ENCODE measurements at regions of chr19 and their contacts with region 1.

Region 1: GRCh38 chr19:39970675-39971379 is at the start of gene PSMC4:
- DNase-seq: peak; percentile 99
- ATAC-seq: peak; percentile 95
- H3K4me3 Mint-ChIP-seq: peak within 1 kb of the TSS; percentile 89
- H3K27ac Mint-ChIP-seq: peak within 1 kb of the TSS; percentile 96
- H3K4me1 Mint-ChIP-seq: peaks cover 47% of the 10 kb centered on the region
- H3K27me3 Mint-ChIP-seq: no peaks in the 10 kb centered on the region
- total RNA-seq, gene PSMC4: 114 to 140 TPM

Region 2: DNA sequence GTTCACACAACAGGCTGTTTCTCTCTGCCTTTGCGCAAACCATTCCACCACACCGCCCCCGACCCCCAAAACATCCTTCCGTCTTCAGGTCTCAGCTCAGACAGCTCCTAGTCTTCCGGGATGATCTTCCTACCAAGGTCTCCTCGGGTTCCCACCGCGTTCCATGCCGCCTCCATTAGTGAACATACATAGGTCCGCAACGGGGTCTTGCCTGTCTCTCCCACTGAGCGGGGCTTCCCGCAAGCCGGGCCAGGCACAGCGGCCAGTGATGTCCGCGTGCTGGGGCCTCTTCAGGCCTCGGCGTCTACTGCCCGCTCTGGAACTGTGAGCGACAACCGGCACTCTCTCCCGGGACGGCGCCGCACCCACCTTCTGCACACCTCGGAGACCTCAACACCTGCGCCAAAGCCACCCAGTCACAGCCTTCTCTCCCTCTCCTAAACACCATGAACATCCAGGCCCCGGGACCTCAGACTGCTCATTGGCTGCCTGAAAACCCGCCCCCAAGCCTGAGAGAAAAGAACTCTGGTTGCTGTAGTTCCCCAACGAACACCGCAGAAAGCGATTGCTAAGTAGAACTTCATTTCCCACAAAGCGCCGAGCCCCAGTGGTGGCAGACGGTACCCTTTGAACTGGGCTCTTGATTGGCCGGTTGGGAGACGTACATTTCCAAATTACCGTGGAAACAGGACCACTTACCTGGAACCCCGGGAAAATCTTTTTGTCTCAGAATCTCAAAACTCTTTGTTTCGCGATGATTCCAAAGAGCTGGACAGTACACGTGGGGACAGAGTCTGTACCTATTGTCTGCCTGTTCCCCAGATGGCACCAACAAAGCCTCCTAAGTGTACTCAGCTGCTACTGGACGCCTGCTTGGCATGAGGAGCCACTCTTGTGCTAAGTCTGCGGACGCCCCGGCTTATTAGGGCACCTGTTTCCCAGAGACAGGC is 146.4 kb before region 1 on chr19:
- CTCF ChIA-PET with region 1: interaction called, 3 read pairs
- POLR2A ChIA-PET with region 1: no interaction called
- intact Hi-C with region 1: loop called in 1 of 2 experiments (anchors 1 kb)
- DNase-seq: peak; percentile 94
- ATAC-seq: peak; percentile 100
- H3K4me3 Mint-ChIP-seq: no peak overlapping the region
- H3K27ac Mint-ChIP-seq: no peak overlapping the region
- H3K4me1 Mint-ChIP-seq: peaks cover 6% of the 10 kb centered on the region
- H3K27me3 Mint-ChIP-seq: no peaks in the 10 kb centered on the region

Region 3: GRCh38 chr19:39846176-39846677 is 124.6 kb before region 1 on chr19 and contains the start of gene FBL:
- CTCF ChIA-PET with region 1: interaction called, 12 read pairs
- POLR2A ChIA-PET with region 1: interaction called, 4 read pairs
- intact Hi-C with region 1: loop called (anchors 1 to 2 kb)
- DNase-seq: peak; percentile 99
- ATAC-seq: peak; percentile 88
- H3K4me3 Mint-ChIP-seq: peak within 1 kb of the TSS; percentile 96
- H3K27ac Mint-ChIP-seq: peak within 1 kb of the TSS; percentile 94
- H3K4me1 Mint-ChIP-seq: peaks cover 48% of the 10 kb centered on the region
- H3K27me3 Mint-ChIP-seq: no peaks in the 10 kb centered on the region
- total RNA-seq, gene FBL: 742 to 890 TPM

Region 4: DNA sequence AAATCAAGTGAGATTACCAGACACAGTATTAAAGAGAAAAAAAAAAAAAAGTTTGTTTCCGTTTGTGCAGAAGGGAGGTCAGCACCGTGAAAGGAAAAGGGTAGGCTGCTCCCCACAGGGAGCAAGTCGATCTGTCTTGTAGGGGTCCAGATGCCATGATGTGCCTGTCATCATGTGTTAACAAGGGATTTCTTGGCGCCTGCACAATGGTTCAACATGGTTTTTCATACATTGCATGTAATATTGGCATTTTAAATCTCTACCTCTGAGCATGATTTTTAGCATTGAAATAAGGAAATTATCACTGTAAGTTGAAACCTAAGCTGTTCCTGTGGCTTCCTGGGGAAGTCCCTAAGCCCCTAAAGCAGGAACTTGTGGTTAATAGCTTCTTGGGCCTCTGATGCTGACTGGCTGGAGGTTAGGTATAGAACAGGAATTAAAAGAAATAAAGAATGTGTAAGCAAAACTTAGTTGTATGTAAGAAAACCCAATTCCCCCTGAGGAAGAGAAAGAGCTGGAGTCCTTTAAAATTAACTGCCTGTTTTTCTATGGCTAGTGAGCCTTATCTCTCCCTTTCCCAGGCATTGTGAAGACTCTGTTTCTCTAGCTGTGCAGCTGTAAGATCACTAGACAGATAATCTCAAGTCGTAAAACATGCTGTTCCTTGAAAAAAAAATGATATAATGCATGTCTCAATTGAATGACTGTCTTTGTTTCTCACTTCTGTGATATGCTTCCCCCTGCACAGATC is 29.0 kb before region 1 on chr19:
- CTCF ChIA-PET with region 1: interaction called, 12 read pairs
- POLR2A ChIA-PET with region 1: interaction called, 10 read pairs
- intact Hi-C with region 1: loop called in 1 of 2 experiments (anchors 2 kb)
- DNase-seq: peak; percentile 58
- ATAC-seq: peak; percentile 54
- H3K4me3 Mint-ChIP-seq: peak overlapping the region; percentile 54
- H3K27ac Mint-ChIP-seq: peak overlapping the region; percentile 79
- H3K4me1 Mint-ChIP-seq: peaks cover 77% of the 10 kb centered on the region
- H3K27me3 Mint-ChIP-seq: no peaks in the 10 kb centered on the region

Region 5: DNA sequence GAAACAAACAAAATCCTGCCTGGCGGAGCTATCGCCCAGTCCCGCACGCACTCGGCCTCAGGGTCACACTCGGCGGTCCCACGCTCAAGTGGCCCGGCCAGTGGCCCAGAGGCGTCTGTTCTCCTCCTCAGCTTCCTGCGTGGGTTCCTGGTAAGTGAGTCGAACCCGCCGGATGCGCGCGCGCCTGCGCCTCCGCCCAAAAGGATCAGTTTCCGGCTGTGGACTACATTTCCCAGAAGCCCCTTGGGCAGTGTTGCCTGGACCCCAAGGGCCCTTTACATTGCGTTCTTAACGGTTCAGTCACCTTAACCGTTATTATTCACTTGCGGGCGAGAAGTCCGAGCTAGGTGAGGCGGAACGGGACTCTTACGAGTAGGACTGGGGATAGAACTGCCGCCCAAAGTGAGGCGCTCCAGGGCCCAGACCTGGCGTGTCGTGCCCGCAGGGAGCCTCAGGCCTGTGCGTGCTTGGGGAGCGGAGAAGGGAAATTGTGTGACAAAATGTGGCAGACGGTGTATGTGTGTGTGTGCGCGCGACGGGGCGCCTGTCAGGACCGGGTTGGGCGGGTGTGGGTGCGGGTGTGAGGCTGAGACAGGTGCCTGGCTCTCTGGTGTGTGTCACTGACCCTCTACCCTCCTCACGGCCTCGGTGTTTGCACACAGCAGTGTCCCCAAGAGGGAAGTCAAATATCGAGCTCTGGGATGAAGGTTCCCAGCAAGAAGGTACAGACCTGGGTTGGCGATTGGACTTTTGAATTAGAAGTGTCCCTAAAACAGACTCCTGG is 26.2 kb after region 1 on chr19 and contains the start of gene ZNF546:
- CTCF ChIA-PET with region 1: interaction called, 12 read pairs
- POLR2A ChIA-PET with region 1: interaction called, 11 read pairs
- intact Hi-C with region 1: loop called (anchors 1 kb)
- DNase-seq: peak; percentile 94
- ATAC-seq: peak; percentile 90
- H3K4me3 Mint-ChIP-seq: peak within 1 kb of the TSS; percentile 90
- H3K27ac Mint-ChIP-seq: peak within 1 kb of the TSS; percentile 99
- H3K4me1 Mint-ChIP-seq: peaks cover 48% of the 10 kb centered on the region
- H3K27me3 Mint-ChIP-seq: no peaks in the 10 kb centered on the region
- total RNA-seq, gene ZNF546: 6.3 to 6.9 TPM

Region 6: DNA sequence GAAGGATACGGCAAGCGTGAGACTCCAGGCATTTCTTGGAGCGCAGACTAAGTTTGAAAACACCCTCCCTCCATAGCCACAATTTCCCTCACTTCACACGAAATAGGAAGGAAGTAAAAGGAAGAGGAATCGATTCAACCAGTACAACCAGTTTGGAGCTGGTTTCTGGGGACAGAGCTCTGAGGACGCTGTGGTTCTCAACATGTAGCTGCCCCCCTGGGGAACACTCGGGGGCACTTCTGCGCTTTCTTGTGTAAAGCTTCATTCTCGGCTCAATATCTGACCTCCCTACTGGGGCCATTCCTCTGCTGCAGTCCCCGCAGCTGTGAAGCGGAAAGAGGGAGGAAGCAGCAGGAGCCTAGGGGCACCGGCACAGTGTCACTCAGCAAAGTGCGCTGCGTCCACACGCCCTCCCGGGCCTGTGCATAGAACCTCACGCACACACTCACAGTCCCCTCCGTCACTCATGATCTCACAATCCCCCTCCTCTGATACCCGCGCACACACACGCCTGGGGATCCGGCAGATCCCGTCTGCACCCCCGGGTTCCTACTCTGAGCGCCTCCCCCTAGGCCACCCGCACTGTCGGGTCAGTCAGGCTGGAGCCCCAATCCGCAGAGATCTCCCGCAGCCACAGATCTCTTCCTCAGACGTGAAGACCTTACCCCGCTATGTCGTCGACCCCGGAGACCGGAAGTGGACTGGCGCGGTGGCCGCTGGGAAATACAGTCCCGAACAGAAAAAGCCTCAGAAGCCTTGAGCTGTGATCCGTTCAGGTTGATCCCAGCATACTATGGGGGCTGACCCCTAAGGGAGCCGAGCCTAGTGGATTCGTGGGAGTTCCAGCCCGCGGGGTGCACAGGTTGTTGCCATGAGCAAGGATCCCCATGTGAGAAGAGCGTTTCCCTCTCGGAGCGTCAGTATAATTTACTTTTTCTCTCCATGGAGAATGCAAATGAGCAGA is 119.7 kb after region 1 on chr19 and contains the start of gene ZNF780A:
- CTCF ChIA-PET with region 1: interaction called, 4 read pairs
- POLR2A ChIA-PET with region 1: interaction called, 6 read pairs
- intact Hi-C with region 1: loop called in 1 of 2 experiments (anchors 1 kb)
- DNase-seq: peak; percentile 88
- ATAC-seq: peak; percentile 94
- H3K4me3 Mint-ChIP-seq: peak within 1 kb of the TSS; percentile 97
- H3K27ac Mint-ChIP-seq: peak within 1 kb of the TSS; percentile 100
- H3K4me1 Mint-ChIP-seq: peaks cover 34% of the 10 kb centered on the region
- H3K27me3 Mint-ChIP-seq: peaks cover 5% of the 10 kb centered on the region
- total RNA-seq, gene ZNF780A: 19.2 to 19.4 TPM

Region 7: DNA sequence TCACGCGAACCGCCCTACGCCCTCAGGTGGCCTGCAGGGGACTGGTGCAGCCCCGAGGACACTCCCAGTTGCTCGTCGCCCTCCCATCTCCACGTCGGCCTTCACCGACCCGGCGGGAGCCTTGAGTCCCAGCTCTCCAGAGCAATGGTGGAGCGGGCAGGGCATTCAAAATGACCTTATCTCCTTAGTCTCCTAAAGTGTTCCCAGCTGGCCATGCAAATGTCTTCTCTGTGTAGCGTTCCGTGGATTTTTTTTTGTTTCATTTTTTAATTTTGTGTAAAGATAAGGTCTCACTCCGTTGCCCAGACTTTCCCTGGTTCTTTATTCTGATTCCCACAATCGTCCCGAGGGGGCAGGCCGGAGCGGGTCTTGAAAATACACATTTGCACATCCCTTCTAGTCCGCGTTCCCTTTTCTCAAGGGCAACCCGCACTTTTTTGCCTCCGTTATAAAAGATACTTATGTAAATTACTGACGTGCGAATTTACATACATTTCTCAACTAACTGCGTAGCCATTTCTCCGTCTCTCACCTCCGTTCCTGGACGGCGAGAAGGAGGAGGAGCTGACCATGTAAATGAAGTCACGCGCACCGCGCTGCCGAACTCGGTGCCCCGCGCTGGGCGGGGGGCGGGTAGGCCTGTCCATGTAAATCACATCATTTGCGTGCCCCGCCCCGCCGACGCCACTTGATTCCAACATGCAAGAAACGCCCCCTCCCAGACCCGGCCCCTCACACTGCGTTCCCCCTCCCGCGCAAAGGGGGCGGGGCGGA is 827.6 kb after region 1 on chr19:
- CTCF ChIA-PET with region 1: no interaction called
- POLR2A ChIA-PET with region 1: interaction called, 3 read pairs
- intact Hi-C with region 1: loop called in 1 of 2 experiments (anchors 2 kb)
- DNase-seq: peak; percentile 100
- ATAC-seq: peak; percentile 82
- H3K4me3 Mint-ChIP-seq: peak overlapping the region; percentile 91
- H3K27ac Mint-ChIP-seq: peak overlapping the region; percentile 97
- H3K4me1 Mint-ChIP-seq: peaks cover 49% of the 10 kb centered on the region
- H3K27me3 Mint-ChIP-seq: no peaks in the 10 kb centered on the region